SK-N-SH (cell line): ENCODE measurements at regions of chr17 and their contacts with region 1.

Region 1: DNA sequence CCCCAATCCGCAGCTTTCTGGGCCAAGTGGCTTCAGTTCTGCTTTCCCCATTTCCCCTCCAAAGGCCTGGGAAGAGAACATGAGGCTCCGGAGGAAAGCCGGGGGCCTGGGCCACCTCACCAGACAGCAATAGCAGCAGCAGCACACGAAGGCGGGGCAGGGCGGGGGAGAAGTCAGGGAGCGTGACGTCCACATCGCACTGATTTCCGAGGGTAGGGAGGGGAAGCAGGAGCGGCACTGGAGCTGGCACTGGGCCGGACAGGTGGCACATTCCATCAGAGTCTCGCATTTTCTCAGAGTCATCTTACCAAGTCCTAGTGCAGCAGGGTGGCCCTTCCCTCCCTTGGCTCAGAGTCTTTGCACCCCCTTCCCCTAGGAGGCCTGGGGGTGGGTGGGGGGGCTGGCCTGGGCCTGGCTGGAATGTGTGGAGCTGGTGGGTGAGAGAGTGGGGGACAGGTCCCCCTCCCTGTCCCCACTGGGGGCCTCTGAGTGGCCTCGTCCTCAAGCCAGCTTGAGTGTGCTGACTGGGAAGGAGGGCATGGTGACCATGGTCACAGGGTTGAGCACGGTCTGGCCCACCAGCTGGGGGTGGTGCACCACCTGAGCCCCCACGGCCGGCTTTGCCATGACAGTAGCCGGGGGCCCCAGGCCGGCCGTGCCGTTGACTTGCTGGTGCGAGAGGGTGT is 14.3 kb downstream of the MNT start:
- DNase-seq: peak; percentile 10
- H3K4me3 ChIP-seq: no peak overlapping the region
- H3K27ac ChIP-seq: no peak overlapping the region; a peak in 1 of 4 replicates
- H3K4me1 ChIP-seq: peaks cover 0 to 44% of the 10 kb centered on the region in 2 experiments; a peak in 1 of 4 replicates
- H3K27me3 ChIP-seq: no peaks in the 10 kb centered on the region
- CTCF ChIP-seq: no peak
- EP300 ChIP-seq: no peak
- RAD21 ChIP-seq: no peak

Region 2: GRCh38 chr17:2244545-2245525 is 141.7 kb before region 1 on chr17:
- CTCF ChIA-PET with region 1: no interaction called
- POLR2A ChIA-PET with region 1: no interaction called
- DNase-seq: peak; percentile 87
- H3K4me3 ChIP-seq: no peak overlapping the region; a peak in 1 of 4 replicates
- H3K27ac ChIP-seq: peak overlapping the region; percentile 18 to 67; a peak in 3 of 4 replicates
- H3K4me1 ChIP-seq: peaks cover 7 to 15% of the 10 kb centered on the region in 2 experiments; a peak in 1 of 4 replicates
- H3K27me3 ChIP-seq: no peaks in the 10 kb centered on the region
- CTCF ChIP-seq: peak; percentile 96
- EP300 ChIP-seq: no peak
- RAD21 ChIP-seq: peak; percentile 98

Region 3: GRCh38 chr17:2354311-2354710 is 32.2 kb before region 1 on chr17:
- CTCF ChIA-PET with region 1: interaction called, 13 read pairs
- POLR2A ChIA-PET with region 1: no interaction called
- DNase-seq: no peak
- H3K4me3 ChIP-seq: no peak overlapping the region
- H3K27ac ChIP-seq: no peak overlapping the region
- H3K4me1 ChIP-seq: peaks cover 2 to 10% of the 10 kb centered on the region in 2 experiments; a peak in 2 of 4 replicates
- H3K27me3 ChIP-seq: no peaks in the 10 kb centered on the region
- CTCF ChIP-seq: no peak
- EP300 ChIP-seq: no peak
- RAD21 ChIP-seq: no peak

Region 4: GRCh38 chr17:2712300-2713043 is 325.9 kb after region 1 on chr17:
- CTCF ChIA-PET with region 1: no interaction called
- POLR2A ChIA-PET with region 1: no interaction called
- DNase-seq: no peak
- H3K4me3 ChIP-seq: peak overlapping the region; percentile 64 to 76
- H3K27ac ChIP-seq: peak overlapping the region in 1 of 2 experiments; percentile 82; a peak in 2 of 4 replicates
- H3K4me1 ChIP-seq: peaks cover 9 to 44% of the 10 kb centered on the region in 2 experiments; a peak in 1 of 4 replicates
- H3K27me3 ChIP-seq: no peaks in the 10 kb centered on the region
- CTCF ChIP-seq: no peak
- EP300 ChIP-seq: no peak
- RAD21 ChIP-seq: no peak